ENCODE measurements at regions of chr15 and their contacts with region 1.

Region 1: GRCh38 chr15:56821721-56822425 is 88.6 kb upstream of the ZNF280D start:
- DNase-seq: peak; percentile 27 to 68 (median 63)
- ATAC-seq: peak; percentile 80 to 87
- H3K4me3 ChIP-seq: no peak overlapping the region
- H3K27ac ChIP-seq: no peak overlapping the region
- H3K4me1 ChIP-seq: peaks cover 6% of the 10 kb centered on the region
- H3K27me3 ChIP-seq: no peaks in the 10 kb centered on the region

Region 2: GRCh38 chr15:56732921-56733797 is 88.7 kb before region 1 on chr15 and contains the start of gene ZNF280D:
- intact Hi-C with region 1: loop called in 1 of 4 experiments (anchors 10 kb)
- DNase-seq: peak; percentile 93 to 98 (median 97)
- ATAC-seq: peak; percentile 95 to 96
- H3K4me3 ChIP-seq: peak within 1 kb of the TSS; percentile 76
- H3K27ac ChIP-seq: peak within 1 kb of the TSS; percentile 98
- H3K4me1 ChIP-seq: peaks cover 6% of the 10 kb centered on the region
- H3K27me3 ChIP-seq: no peaks in the 10 kb centered on the region
- total RNA-seq, gene ZNF280D: 28.4 to 31.7 (median 30.8) TPM

Region 3: GRCh38 chr15:56869573-56869972 is 47.7 kb after region 1 on chr15:
- intact Hi-C with region 1: loop called in 1 of 4 experiments (anchors 5 kb)
- DNase-seq: peak; percentile 46 to 71 (median 57)
- ATAC-seq: peak in 1 of 2 donors; percentile 51
- H3K4me3 ChIP-seq: no peak overlapping the region
- H3K27ac ChIP-seq: no peak overlapping the region
- H3K4me1 ChIP-seq: peaks cover 1% of the 10 kb centered on the region
- H3K27me3 ChIP-seq: no peaks in the 10 kb centered on the region

Region 4: DNA sequence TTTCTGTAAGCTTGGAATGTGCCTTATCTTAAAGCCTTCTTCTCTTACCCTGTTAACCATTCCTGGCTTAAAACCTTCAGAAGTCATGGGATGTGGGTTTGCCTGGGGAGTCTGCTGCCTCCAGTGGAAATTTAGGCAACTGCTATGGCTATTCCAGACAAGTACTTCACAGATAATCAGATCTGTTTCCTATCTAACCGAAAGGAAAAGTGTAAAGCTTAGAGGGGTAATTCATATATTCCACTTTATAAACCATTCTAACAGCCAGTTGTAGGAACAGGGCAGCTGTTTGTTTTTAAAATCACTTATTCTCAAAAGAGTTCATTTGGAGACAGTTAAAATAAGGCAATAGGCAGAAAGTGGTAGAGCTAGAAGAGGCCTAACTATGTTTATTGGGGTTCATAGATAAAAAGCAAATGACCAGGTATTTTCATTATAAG is 316.5 kb after region 1 on chr15:
- intact Hi-C with region 1: loop called in 1 of 4 experiments (anchors 10 kb)
- DNase-seq: no peak
- ATAC-seq: peak; percentile 76 to 86
- H3K4me3 ChIP-seq: peak overlapping the region; percentile 15
- H3K27ac ChIP-seq: no peak overlapping the region
- H3K4me1 ChIP-seq: peaks cover 2% of the 10 kb centered on the region
- H3K27me3 ChIP-seq: no peaks in the 10 kb centered on the region

Region 5: DNA sequence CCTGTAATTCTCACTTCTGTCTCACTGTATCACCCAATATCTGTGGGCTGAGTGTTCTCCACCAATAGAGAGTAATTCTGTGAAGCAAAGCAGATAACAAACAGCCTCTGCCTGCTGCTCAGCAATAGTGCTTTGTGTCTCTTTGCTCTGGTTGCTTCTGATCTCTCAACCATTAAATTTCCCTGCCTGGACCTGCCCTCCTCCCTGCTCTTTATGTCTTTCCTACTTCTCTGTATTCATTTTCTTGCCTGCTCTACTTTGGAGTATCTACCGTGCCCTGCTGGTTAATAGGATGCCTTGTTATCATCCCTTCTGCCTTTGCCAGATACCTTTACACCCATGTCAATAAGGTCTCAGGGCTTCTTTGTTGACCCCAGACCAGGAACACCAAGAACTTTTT is 451.5 kb after region 1 on chr15:
- intact Hi-C with region 1: no loop called
- DNase-seq: no peak
- ATAC-seq: no peak
- H3K4me3 ChIP-seq: no peak overlapping the region
- H3K27ac ChIP-seq: no peak overlapping the region
- H3K4me1 ChIP-seq: no peaks in the 10 kb centered on the region
- H3K27me3 ChIP-seq: no peaks in the 10 kb centered on the region

Measured in right cardiac atrium (tissue), 5 donors.